Common myeloid progenitor, CD34-positive (primary cell): ENCODE measurements at regions of chr16 and their contacts with region 1.

Region 1: GRCh38 chr16:81493755-81494433 is 49.3 kb downstream of the CMIP start:
- DNase-seq: peak in 2 of 3 donors; percentile 65 to 76
- H3K4me3 ChIP-seq: no peak overlapping the region
- H3K27ac ChIP-seq: peak overlapping the region in 1 of 2 experiments; percentile 17
- H3K4me1 ChIP-seq: peaks cover 0 to 57% (median 55%) of the 10 kb centered on the region in 4 experiments
- H3K27me3 ChIP-seq: no peaks in the 10 kb centered on the region

Region 2: GRCh38 chr16:81385031-81385756 is 108.7 kb before region 1 on chr16:
- CTCF ChIA-PET with region 1: no interaction called
- POLR2A ChIA-PET with region 1: no interaction called
- DNase-seq: no peak
- H3K4me3 ChIP-seq: no peak overlapping the region
- H3K27ac ChIP-seq: no peak overlapping the region
- H3K4me1 ChIP-seq: no peaks in the 10 kb centered on the region
- H3K27me3 ChIP-seq: no peaks in the 10 kb centered on the region

Region 3: DNA sequence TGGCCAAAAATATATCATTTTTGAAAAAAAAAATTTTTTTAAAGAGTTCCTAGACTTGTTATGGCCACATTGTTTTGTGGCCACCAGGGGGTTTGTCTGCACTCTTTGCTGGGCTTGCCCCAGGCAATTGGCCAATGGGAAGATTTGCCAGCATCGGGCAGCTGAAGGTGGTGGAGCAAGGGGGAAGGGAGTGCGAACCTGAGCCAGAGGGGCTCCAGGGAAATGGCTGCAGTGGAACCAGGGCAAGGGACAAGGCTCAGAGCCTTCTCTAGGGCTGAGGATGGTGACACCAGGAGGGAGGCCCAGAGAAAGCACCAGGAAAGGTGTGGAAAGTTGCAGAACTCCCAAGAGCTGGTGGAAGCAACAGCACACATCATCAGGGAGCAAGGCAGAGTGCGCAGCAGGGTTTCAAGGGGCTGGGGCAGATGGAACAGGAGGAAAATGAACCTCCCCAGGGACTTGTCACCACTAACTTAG is 64.8 kb before region 1 on chr16:
- CTCF ChIA-PET with region 1: interaction called, 11 read pairs
- POLR2A ChIA-PET with region 1: no interaction called
- DNase-seq: peak; percentile 70 to 81 (median 77)
- H3K4me3 ChIP-seq: no peak overlapping the region
- H3K27ac ChIP-seq: no peak overlapping the region
- H3K4me1 ChIP-seq: peaks cover 2 to 32% (median 20%) of the 10 kb centered on the region in 4 experiments
- H3K27me3 ChIP-seq: no peaks in the 10 kb centered on the region

Region 4: DNA sequence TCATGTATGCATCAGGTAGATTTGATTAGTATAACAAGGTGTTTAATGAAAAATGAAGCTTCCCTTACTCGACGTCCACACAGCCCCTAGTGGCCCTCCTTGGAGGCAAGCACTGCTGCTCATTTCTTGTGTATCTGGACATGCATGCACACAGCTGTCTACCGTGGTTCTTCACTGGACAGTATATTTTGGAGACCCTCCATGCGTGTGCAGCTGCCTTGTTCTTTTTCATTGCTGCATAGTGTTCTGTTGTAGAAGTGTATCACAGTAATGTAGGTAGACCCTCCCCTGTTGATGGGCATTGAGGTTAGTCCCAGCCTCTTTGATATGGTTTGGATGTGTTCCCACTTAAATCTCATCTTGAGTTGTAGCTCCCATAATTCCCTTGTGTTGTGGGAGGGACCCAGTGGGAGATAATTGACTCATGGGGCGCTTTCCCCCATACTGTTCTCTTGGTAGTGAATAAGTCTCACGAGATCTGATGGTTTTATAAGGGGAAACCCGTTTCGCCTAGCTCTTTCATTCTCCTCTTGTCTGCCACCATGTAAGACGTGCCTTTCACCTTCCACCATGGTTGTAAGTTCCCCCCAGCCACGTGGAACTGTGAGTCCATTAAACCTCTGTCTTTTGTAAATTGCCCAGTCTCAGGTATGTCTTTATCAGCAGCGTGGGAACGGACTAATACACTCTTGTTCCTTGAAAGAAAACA is 43.0 kb before region 1 on chr16:
- CTCF ChIA-PET with region 1: interaction called, 10 read pairs
- POLR2A ChIA-PET with region 1: no interaction called
- DNase-seq: no peak
- H3K4me3 ChIP-seq: no peak overlapping the region
- H3K27ac ChIP-seq: peak overlapping the region in 1 of 2 experiments; percentile 50
- H3K4me1 ChIP-seq: peaks cover 4 to 57% (median 51%) of the 10 kb centered on the region in 4 experiments
- H3K27me3 ChIP-seq: no peaks in the 10 kb centered on the region

Region 5: DNA sequence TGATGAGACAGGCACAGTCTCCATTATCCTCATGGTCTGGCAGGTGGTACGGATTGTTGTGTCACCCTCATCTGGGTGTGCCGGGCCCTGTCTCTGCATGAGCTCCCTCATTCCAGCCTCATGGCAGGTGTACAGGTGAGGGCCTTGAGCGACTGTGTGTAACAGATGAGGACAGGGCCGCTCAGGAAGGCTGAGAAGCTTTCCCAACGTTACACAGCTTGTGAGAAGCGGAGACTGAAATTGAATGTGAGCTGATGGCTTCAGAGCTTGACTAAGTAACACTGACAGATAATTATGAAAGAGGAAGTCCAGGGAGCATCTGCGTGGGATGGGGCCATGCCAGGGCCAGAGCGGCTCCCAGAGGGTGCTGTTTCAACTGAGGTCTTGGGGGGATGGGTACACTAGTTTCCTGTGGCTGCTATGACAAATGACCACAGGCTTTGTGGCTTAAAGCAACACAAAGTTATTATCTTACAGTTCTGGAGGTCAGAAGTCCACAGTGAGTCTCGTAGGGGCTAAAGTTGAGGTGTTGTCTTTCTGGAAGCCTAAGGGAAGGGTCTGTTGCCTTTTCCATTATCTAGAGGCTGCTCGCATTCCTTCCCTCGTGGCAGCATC is 12.6 kb before region 1 on chr16:
- CTCF ChIA-PET with region 1: interaction called, 59 read pairs
- POLR2A ChIA-PET with region 1: interaction called, 3 read pairs
- DNase-seq: peak; percentile 58 to 87 (median 83)
- H3K4me3 ChIP-seq: peak overlapping the region in 2 of 7 experiments; percentile 11 to 19
- H3K27ac ChIP-seq: peak overlapping the region in 1 of 2 experiments; percentile 68
- H3K4me1 ChIP-seq: peaks cover 34 to 90% (median 60%) of the 10 kb centered on the region in 4 experiments
- H3K27me3 ChIP-seq: no peaks in the 10 kb centered on the region

Region 6: DNA sequence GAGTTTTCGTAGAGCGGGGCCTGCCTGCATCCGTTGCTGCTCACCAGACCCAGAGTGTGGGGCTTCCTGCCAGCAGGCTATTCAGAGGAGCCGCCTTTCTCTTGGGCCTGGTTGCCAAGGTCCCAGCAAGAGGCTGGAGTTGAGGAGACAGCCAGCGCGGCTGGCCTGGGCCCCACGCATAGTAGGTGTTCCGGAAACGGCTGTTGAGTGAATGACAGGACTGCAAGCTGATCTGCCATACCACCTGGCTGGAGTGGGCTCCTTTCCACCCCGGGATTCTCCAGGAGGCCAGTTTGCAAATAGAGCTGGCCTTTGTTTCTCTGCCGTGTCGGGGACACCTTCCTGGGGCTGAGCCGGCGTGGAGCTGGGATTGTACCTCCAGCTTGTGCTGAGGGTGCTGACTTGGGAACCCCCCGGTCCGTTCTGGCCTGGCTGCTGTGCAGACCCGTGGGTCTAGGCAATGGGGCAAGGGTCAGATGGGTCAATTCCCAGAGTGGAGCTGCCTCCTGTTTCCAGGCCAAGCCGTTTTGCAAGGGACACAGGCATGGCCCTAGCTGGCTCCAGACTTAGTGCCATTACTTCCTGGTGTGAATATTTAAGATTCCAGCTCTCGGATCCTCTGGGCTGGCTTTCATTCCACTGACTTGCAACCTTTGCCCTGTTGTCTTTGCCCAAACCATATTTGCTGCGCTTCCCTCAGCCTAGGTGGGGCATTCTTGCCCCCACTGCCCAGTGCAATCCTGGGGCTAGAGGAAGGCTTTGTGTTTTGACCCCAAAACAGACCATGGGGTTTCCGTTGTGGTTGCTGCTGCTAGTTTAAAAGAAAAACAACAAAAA is 19.5 kb after region 1 on chr16:
- CTCF ChIA-PET with region 1: interaction called, 13 read pairs
- POLR2A ChIA-PET with region 1: no interaction called
- DNase-seq: peak; percentile 45 to 95 (median 92)
- H3K4me3 ChIP-seq: peak overlapping the region in 3 of 7 experiments; percentile 11 to 54 (median 33)
- H3K27ac ChIP-seq: peak overlapping the region in 1 of 2 experiments; percentile 43
- H3K4me1 ChIP-seq: peaks cover 7 to 38% (median 31%) of the 10 kb centered on the region in 4 experiments
- H3K27me3 ChIP-seq: no peaks in the 10 kb centered on the region

Region 7: GRCh38 chr16:81600901-81601428 is 107.1 kb after region 1 on chr16:
- CTCF ChIA-PET with region 1: no interaction called
- POLR2A ChIA-PET with region 1: no interaction called
- DNase-seq: no peak
- H3K4me3 ChIP-seq: no peak overlapping the region
- H3K27ac ChIP-seq: no peak overlapping the region
- H3K4me1 ChIP-seq: no peaks in the 10 kb centered on the region
- H3K27me3 ChIP-seq: no peaks in the 10 kb centered on the region